GM12878 (cell line): ENCODE measurements at regions of chr1 and their contacts with region 1.

Region 1: GRCh38 chr1:236603991-236604904 is at the start of gene HEATR1:
- DNase-seq: peak; percentile 83
- ATAC-seq: peak; percentile 95
- H3K4me3 ChIP-seq: peak within 1 kb of the TSS; percentile 90
- H3K27ac ChIP-seq: peak within 1 kb of the TSS; percentile 61
- H3K4me1 ChIP-seq: no peaks in the 10 kb centered on the region
- H3K27me3 ChIP-seq: no peaks in the 10 kb centered on the region
- CTCF ChIP-seq: no peak
- EP300 ChIP-seq: peak in 1 of 2 experiments; percentile 20; a peak in 1 of 4 replicates
- POLR2A ChIP-seq: peak; percentile 84
- RAD21 ChIP-seq: no peak
- polyA plus RNA-seq, gene HEATR1: 8.6 to 16.7 TPM

Region 2: DNA sequence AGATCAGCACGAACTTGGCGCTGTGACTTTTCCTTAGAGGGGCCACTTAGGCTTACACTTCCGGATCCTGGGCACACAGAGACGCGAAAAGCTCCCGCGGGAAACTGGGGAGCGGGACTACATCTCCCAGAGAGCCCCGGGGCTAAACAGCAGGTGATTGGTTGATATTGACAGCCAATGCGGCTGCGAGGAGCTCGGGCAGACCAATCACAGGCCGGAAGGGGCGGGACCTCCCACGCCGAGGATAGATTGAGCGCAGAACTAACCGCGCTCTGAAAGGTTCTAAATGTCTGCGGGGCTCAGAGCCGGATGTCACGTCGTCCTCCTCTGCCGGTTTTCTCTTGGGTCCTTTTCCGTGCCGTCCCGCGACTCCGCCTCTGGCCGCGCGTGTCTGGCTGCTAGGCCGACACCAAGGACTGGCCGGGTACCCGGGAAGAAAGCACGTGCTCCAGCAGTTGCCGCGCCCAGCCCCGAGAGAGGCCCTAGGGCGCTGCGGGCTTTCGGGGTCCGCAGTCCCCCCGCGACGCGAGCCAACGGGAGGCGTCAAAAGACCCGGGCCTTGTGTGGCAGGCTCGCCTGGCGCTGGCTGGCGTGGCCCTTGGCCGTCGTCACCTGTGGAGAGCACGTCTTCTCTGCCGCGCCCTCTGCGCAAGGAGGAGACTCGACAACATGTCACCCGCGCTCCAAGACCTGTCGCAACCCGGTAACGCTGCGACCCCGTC is 190.9 kb after region 1 on chr1 and contains the start of gene MTR:
- CTCF ChIA-PET with region 1: interaction called, 4 read pairs
- POLR2A ChIA-PET with region 1: interaction called, 13 read pairs
- RAD21 ChIA-PET with region 1: interaction called, 5 read pairs
- SMC1A ChIA-PET with region 1: interaction called, 5 read pairs
- in situ Hi-C with region 1: no loop called
- intact Hi-C with region 1: loop called (anchors 1 kb)
- DNase-seq: peak; percentile 89
- ATAC-seq: peak; percentile 97
- H3K4me3 ChIP-seq: peak within 1 kb of the TSS; percentile 97
- H3K27ac ChIP-seq: peak within 1 kb of the TSS; percentile 95
- H3K4me1 ChIP-seq: peaks cover 3% of the 10 kb centered on the region
- H3K27me3 ChIP-seq: no peaks in the 10 kb centered on the region
- CTCF ChIP-seq: no peak
- EP300 ChIP-seq: no peak
- POLR2A ChIP-seq: peak; percentile 90
- RAD21 ChIP-seq: no peak
- polyA plus RNA-seq, gene MTR: 2.4 to 5.3 TPM

Region 3: DNA sequence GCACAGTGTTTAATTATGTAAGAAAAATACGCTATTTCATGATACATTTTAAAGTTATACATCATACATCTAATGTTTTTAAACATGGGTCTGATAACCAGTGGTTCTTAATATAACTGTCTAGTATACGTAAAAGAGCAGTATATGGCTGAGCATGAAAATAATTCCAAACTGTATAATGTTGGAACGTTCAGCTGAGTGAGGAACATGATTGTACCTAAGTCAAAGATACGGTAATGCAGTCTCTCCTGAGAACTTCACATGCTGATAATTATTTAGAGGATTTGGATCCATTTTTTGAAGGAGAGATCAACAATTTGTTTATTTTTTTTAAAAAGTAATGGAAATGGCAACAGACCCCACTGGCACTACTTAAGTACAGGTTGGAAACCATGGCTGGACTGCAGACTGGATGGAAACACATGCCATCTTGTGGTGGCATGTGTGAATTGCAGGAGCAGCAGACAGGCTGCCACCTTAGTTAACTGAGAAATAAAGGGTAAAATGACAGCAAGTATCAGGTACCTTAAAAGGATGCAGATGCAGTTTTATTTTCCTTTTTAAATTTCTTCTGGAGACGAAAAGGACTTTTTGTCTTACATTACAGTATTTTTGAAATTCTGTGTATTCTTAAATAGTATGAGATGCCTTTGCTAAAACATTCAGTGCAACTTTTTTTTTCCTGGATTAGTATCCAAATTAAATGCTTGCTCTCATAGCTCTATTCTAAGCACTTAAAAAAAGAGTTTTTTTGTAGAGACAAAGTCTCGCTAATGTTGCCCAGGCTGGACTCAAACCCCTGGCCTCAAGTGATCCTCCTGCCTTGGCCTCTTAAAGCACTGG is 264.6 kb after region 1 on chr1:
- CTCF ChIA-PET with region 1: no interaction called
- POLR2A ChIA-PET with region 1: no interaction called
- RAD21 ChIA-PET with region 1: no interaction called
- SMC1A ChIA-PET with region 1: no interaction called
- in situ Hi-C with region 1: loop called (anchors 10 kb)
- intact Hi-C with region 1: loop called (anchors 5 kb)
- DNase-seq: peak; percentile 17
- ATAC-seq: peak; percentile 97
- H3K4me3 ChIP-seq: no peak overlapping the region
- H3K27ac ChIP-seq: no peak overlapping the region
- H3K4me1 ChIP-seq: no peaks in the 10 kb centered on the region
- H3K27me3 ChIP-seq: no peaks in the 10 kb centered on the region
- CTCF ChIP-seq: peak; percentile 84 to 94 (median 90)
- EP300 ChIP-seq: no peak
- POLR2A ChIP-seq: no peak
- RAD21 ChIP-seq: peak; percentile 67

Region 4: DNA sequence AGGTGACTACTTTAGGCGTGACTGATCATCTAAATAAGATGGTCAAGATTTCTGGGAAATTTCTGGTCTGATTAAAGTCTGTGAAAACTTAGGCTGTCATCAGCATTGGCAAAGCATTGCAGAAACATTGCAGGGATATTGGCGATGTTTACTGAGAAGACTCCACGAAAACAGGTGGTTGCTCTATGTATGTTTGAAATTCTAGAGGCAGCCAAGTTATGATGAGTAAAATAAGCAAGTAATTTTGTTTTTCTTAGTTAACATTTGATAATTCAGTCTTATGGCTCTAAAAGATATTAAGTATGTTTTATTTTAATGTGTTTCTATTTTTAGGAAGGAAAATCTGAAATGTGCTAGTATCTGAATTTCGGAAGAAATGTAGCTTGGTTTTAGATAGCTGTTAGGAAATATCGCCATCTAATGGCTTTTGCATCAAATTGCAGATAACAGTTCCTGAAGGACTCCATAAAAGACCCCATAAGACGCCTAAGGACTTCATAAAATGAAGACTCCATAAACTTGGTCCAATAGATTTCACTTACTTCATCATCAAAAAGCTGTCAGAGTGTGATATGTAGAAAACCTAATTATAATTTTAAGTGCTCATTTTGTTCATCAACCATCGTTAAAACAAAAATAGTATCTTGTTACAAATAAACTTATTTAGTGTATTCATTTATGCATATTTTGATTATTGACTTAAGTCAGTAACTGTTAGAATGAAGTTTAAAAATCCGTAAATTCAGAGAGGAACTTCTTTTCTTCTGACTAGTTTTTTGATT is 782.3 kb after region 1 on chr1:
- CTCF ChIA-PET with region 1: interaction called, 5 read pairs
- POLR2A ChIA-PET with region 1: no interaction called
- RAD21 ChIA-PET with region 1: no interaction called
- SMC1A ChIA-PET with region 1: interaction called, 5 read pairs
- in situ Hi-C with region 1: no loop called
- intact Hi-C with region 1: loop called (anchors 5 kb)
- DNase-seq: no peak
- ATAC-seq: peak; percentile 58
- H3K4me3 ChIP-seq: no peak overlapping the region
- H3K27ac ChIP-seq: no peak overlapping the region
- H3K4me1 ChIP-seq: no peaks in the 10 kb centered on the region
- H3K27me3 ChIP-seq: no peaks in the 10 kb centered on the region
- CTCF ChIP-seq: peak; percentile 46 to 61 (median 55); a peak in 5 of 6 replicates
- EP300 ChIP-seq: no peak
- POLR2A ChIP-seq: no peak
- RAD21 ChIP-seq: peak; percentile 63

Region 5: GRCh38 chr1:237562242-237562823 is 958.1 kb after region 1 on chr1:
- CTCF ChIA-PET with region 1: interaction called, 8 read pairs
- POLR2A ChIA-PET with region 1: no interaction called
- RAD21 ChIA-PET with region 1: interaction called, 6 read pairs
- SMC1A ChIA-PET with region 1: no interaction called
- in situ Hi-C with region 1: loop called (anchors 10 kb)
- intact Hi-C with region 1: no loop called
- DNase-seq: peak; percentile 4
- ATAC-seq: peak; percentile 93
- H3K4me3 ChIP-seq: no peak overlapping the region
- H3K27ac ChIP-seq: no peak overlapping the region
- H3K4me1 ChIP-seq: no peaks in the 10 kb centered on the region
- H3K27me3 ChIP-seq: no peaks in the 10 kb centered on the region
- CTCF ChIP-seq: peak; percentile 31 to 52 (median 52); a peak in 5 of 6 replicates
- EP300 ChIP-seq: no peak
- POLR2A ChIP-seq: no peak
- RAD21 ChIP-seq: peak; percentile 47